Activated CD4-positive, alpha-beta T cell treated with anti-CD3 and anti-CD28 coated beads for 36 hours (primary cell): ENCODE measurements at regions of chr19 and their contacts with region 1.

Region 1: DNA sequence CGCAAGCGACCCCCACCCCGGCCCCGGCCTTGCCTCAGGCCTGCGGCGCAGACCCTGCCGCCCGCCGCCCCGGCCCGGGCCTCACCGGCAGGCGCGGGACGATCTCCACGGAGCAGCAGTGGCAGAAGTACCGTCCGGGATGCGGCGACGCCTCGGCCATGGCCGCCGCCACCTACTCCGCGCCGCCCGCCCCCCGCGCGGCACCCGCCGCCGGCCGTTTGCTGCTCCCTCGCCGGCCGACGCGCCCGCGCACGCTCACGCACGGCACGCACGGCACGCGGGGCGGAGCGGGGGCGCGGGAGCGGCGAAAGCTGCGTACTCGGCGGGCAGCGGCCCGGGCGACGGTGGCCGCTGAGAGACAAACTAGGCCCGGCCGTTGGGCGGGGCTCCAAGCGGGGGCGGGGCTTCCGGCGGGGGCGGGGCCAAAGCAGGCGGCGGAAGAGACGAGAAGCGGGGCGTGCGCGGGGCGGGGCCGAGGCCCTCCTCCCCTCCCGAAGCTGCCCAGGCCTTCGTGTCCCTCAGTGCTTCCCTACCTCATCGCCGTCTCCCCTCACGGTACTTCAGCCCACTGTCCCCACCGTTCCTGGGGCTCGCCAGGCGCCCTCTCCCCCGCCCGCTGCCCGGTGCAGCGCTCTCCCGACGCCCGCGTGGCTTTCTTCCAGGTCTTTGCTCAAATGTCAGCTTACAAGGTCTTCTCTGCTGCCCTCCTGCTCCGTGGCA is at the start of gene RNF126:
- DNase-seq: peak; percentile 98
- ATAC-seq: peak; percentile 49
- H3K4me3 Mint-ChIP-seq: peak within 1 kb of the TSS; percentile 96
- H3K27ac Mint-ChIP-seq: peak within 1 kb of the TSS; percentile 95
- H3K4me1 Mint-ChIP-seq: peaks cover 37% of the 10 kb centered on the region
- H3K27me3 Mint-ChIP-seq: no peaks in the 10 kb centered on the region
- total RNA-seq, gene RNF126: 83.0 to 91.3 TPM

Region 2: GRCh38 chr19:506404-507285 is 156.5 kb before region 1 on chr19:
- CTCF ChIA-PET with region 1: interaction called, 4 read pairs
- POLR2A ChIA-PET with region 1: no interaction called
- intact Hi-C with region 1: loop called in 1 of 2 experiments (anchors 1 kb)
- DNase-seq: peak; percentile 97
- ATAC-seq: peak; percentile 72
- H3K4me3 Mint-ChIP-seq: peak overlapping the region; percentile 95
- H3K27ac Mint-ChIP-seq: peak overlapping the region; percentile 100
- H3K4me1 Mint-ChIP-seq: peaks cover 41% of the 10 kb centered on the region
- H3K27me3 Mint-ChIP-seq: no peaks in the 10 kb centered on the region

Region 3: GRCh38 chr19:610801-611505 is 52.2 kb before region 1 on chr19:
- CTCF ChIA-PET with region 1: no interaction called
- POLR2A ChIA-PET with region 1: interaction called, 8 read pairs
- intact Hi-C with region 1: loop called in 1 of 2 experiments (anchors 1 kb)
- DNase-seq: peak; percentile 75
- ATAC-seq: peak; percentile 45
- H3K4me3 Mint-ChIP-seq: peak overlapping the region; percentile 72
- H3K27ac Mint-ChIP-seq: peak overlapping the region; percentile 97
- H3K4me1 Mint-ChIP-seq: peaks cover 25% of the 10 kb centered on the region
- H3K27me3 Mint-ChIP-seq: peaks cover 2% of the 10 kb centered on the region

Region 4: DNA sequence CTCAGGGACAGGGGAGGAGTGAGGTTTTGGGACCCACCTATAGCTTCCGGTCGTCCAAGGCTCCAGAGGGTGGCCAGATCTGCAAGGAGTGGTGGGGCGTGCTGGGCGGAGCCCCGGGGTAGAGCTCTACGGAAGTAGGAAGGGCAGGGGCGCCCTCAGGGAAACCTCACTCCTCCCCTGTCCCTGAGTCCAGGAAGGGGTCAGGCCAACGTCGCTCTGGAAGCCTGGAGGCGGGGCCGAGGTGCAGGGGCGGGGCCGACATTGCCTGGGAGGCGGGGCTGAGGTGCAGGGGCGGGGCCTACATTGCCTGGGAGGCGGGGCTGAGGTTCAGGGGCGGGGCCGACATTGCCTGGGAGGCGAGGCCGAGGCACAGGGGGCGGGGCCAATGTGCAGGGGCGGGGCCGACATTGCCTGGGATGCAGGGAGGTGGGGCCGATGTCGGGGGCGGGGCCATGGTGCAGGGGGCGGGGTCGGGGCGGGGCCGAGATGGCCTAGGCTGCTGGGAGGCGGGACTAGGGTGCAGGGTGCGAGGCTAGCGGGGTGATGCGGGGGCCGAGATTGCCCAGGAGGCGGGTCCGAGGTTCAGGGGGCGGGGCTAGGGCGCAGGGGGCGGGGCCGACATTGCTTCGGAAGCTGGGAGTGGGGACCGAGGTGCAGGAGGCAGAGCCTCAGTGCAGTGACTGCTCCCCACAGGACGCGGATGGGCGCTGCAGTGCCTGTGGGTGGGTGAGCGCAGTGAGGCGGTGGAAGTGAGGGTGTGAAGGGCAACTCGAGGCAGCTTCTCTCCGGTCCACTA is 40.7 kb after region 1 on chr19:
- CTCF ChIA-PET with region 1: no interaction called
- POLR2A ChIA-PET with region 1: no interaction called
- intact Hi-C with region 1: loop called in 1 of 2 experiments (anchors 2 kb)
- DNase-seq: peak; percentile 90
- ATAC-seq: peak; percentile 74
- H3K4me3 Mint-ChIP-seq: no peak overlapping the region
- H3K27ac Mint-ChIP-seq: no peak overlapping the region
- H3K4me1 Mint-ChIP-seq: peaks cover 6% of the 10 kb centered on the region
- H3K27me3 Mint-ChIP-seq: peaks cover 14% of the 10 kb centered on the region

Region 5: DNA sequence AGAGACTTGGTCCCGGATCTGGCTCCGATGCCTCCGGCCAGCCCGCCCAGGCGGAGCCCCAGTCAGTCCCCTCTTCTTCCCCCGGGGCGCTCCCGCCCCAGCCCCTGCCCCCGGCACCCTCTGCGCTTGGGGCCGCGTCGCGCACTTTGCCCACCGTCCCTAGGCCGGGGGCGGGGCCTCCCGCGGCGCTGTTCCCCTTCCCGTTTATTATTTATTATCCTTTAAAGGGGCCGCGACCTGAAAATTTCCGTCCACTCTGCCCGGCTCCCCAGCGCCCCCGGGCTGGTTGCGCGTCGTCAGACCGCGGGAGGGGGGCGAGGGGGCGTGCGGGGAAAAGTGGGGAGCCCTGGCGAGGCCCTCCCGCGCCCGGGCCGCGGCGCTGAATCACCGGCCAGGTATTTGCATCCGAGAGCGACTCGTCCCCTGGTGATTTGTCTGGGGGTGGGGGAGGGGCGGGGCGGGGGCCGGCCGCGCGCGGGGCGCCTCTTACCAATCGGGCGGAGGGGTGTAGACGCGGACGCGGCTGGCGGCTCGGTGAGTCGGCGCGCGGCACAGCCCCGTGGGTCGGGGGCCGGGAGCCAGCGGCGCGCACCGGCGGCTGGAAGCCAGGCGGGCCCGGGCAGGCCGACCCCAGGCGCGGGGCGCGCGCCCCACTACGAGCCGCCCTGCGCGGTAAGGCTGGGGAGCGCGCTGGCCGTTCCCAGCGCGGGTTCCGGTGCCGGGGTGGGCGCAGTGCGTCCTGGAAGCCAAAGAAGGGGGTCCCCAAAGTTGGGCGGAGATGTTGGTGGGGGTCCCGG is 262.6 kb after region 1 on chr19 and contains the start of gene ARID3A:
- CTCF ChIA-PET with region 1: interaction called, 3 read pairs
- POLR2A ChIA-PET with region 1: no interaction called
- intact Hi-C with region 1: loop called in 1 of 2 experiments (anchors 5 kb)
- DNase-seq: peak; percentile 85
- ATAC-seq: peak; percentile 42
- H3K4me3 Mint-ChIP-seq: peak within 1 kb of the TSS; percentile 70
- H3K27ac Mint-ChIP-seq: peak within 1 kb of the TSS; percentile 37
- H3K4me1 Mint-ChIP-seq: peaks cover 17% of the 10 kb centered on the region
- H3K27me3 Mint-ChIP-seq: no peaks in the 10 kb centered on the region
- total RNA-seq, gene ARID3A: 25.1 to 36.0 TPM

Region 6: DNA sequence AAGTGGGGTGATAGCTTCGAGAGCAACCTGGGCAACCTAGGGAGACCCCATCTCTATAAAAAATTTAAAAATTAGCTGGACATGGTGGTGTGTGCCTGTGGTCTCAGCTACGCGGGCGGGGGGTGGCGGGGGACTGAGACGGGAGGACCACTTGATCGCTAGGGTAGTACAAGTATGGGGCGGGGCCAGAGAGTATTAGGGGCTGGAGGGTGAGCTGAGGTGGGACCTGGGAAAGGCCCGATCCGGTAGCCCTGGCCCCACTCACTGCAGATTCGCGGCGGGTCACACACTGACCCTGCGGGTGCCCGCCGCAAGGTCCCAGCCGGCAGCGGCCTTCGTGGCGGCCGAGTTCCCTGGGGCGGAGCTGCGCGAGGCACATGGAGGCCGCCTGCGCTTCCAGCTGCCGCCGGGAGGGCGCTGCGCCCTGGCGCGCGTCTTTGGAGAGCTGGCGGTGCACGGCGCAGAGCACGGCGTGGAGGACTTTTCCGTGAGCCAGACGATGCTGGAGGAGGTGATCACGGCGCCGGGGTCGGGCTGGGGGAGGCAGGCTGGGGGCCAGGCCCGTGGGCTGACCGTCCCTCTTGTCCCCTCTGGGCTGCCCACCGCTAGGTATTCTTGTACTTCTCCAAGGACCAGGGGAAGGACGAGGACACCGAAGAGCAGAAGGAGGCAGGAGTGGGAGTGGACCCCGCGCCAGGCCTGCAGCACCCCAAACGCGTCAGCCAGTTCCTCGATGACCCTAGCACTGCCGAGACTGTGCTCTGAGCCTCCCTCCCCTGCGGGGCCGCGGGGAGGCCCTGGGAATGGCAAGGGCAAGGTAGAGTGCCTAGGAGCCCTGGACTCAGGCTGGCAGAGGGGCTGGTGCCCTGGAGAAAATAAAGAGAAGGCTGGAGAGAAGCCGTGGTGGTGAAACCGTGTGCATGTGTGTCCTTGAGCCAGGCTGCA is 401.8 kb after region 1 on chr19:
- CTCF ChIA-PET with region 1: no interaction called
- POLR2A ChIA-PET with region 1: no interaction called
- intact Hi-C with region 1: loop called in 1 of 2 experiments (anchors 2 kb)
- DNase-seq: peak; percentile 86
- ATAC-seq: peak; percentile 48
- H3K4me3 Mint-ChIP-seq: no peak overlapping the region
- H3K27ac Mint-ChIP-seq: no peak overlapping the region
- H3K4me1 Mint-ChIP-seq: peaks cover 33% of the 10 kb centered on the region
- H3K27me3 Mint-ChIP-seq: no peaks in the 10 kb centered on the region

Region 7: GRCh38 chr19:1275260-1275975 is 612.3 kb after region 1 on chr19 and contains the start of gene FAM174C:
- CTCF ChIA-PET with region 1: no interaction called
- POLR2A ChIA-PET with region 1: no interaction called
- intact Hi-C with region 1: loop called in 1 of 2 experiments (anchors 1 kb)
- DNase-seq: peak; percentile 99
- ATAC-seq: peak; percentile 82
- H3K4me3 Mint-ChIP-seq: peak within 1 kb of the TSS; percentile 83
- H3K27ac Mint-ChIP-seq: peak within 1 kb of the TSS; percentile 95
- H3K4me1 Mint-ChIP-seq: peaks cover 54% of the 10 kb centered on the region
- H3K27me3 Mint-ChIP-seq: no peaks in the 10 kb centered on the region
- total RNA-seq, gene FAM174C: 75.3 to 88.3 TPM